BJ (cell line): ENCODE measurements at regions of chr21 and their contacts with region 1.

Region 1: GRCh38 chr21:29298348-29299045 is at the start of gene BACH1:
- DNase-seq: no peak
- H3K4me3 ChIP-seq: peak within 1 kb of the TSS; percentile 91
- H3K27me3 ChIP-seq: no peaks in the 10 kb centered on the region
- CTCF ChIP-seq: 0 out of 2 replicates have a peak, but pooled peaks have one; percentile 7
- polyA plus RNA-seq, gene BACH1: 22.7 and 37.7 TPM in 2 replicates

Region 2: DNA sequence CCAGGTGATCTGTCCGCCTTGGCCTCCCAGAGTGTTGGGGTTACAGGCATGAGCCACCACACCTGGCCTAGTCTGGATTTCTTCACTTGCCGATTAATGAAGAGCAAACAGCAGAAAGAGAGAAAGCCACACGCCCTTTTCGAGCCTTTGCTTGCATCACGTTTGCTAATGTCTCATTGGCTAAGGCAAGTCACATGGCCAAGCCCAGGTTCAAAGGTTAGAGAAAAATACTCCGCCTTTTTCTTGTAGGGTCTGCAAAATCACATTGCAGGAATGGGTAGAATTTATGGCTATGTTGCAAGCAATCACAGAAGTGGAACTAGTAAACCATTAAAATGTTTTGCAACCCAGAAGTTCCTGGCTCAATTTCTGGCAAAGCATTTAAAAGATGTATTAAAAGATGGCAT is 26.6 kb before region 1 on chr21:
- CTCF ChIA-PET with region 1: no interaction called
- POLR2A ChIA-PET with region 1: interaction called, 16 read pairs
- DNase-seq: no peak
- H3K4me3 ChIP-seq: no peak overlapping the region
- H3K27me3 ChIP-seq: no peaks in the 10 kb centered on the region
- CTCF ChIP-seq: no peak

Region 3: GRCh38 chr21:30340441-30341241 is 1042.1 kb after region 1 on chr21:
- CTCF ChIA-PET with region 1: no interaction called
- POLR2A ChIA-PET with region 1: no interaction called
- DNase-seq: no peak
- H3K4me3 ChIP-seq: no peak overlapping the region
- H3K27me3 ChIP-seq: no peaks in the 10 kb centered on the region
- CTCF ChIP-seq: peak; percentile 52